IMR-90 (cell line): ENCODE measurements at regions of chr12 and their contacts with region 1.

Region 1: GRCh38 chr12:2422591-2422990 is 369.8 kb downstream of the CACNA1C start:
- DNase-seq: no peak
- ATAC-seq: no peak
- H3K4me3 ChIP-seq: no peak overlapping the region
- H3K27ac ChIP-seq: no peak overlapping the region
- H3K4me1 ChIP-seq: no peaks in the 10 kb centered on the region
- H3K27me3 ChIP-seq: no peaks in the 10 kb centered on the region
- CTCF ChIP-seq: no peak
- POLR2A ChIP-seq: no peak
- RAD21 ChIP-seq: no peak

Region 2: DNA sequence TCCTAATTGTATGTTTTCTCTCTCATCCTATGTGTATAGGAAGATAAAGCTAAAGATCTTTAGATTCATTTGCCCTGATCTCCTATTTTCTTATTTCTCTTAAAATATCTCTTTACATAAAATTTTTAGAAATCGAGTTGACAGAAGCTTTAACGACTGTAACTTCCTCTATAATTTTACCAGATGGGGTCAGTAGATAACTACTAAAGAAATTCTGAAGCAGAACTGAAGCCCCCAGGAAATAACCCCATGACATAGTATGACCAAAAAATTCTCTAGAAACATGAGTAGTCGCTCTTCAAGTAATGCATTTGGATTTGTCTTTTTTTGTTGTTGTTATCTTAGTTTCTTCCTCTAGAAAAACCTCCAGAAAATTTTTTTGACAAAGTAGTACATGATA is 1143.5 kb before region 1 on chr12:
- CTCF ChIA-PET with region 1: no interaction called
- POLR2A ChIA-PET with region 1: no interaction called
- dilution Hi-C with region 1: no loop called
- in situ Hi-C with region 1: no loop called
- intact Hi-C with region 1: no loop called
- DNase-seq: no peak
- ATAC-seq: no peak
- H3K4me3 ChIP-seq: no peak overlapping the region
- H3K27ac ChIP-seq: no peak overlapping the region
- H3K4me1 ChIP-seq: peaks cover 4% of the 10 kb centered on the region
- H3K27me3 ChIP-seq: no peaks in the 10 kb centered on the region
- CTCF ChIP-seq: peak; percentile 25; the same call in 1 of the 2 replicates
- POLR2A ChIP-seq: no peak
- RAD21 ChIP-seq: peak; percentile 22; the same call in 1 of the 2 replicates

Region 3: GRCh38 chr12:2358986-2359658 is 63.5 kb before region 1 on chr12:
- CTCF ChIA-PET with region 1: no interaction called
- POLR2A ChIA-PET with region 1: no interaction called
- dilution Hi-C with region 1: no loop called
- in situ Hi-C with region 1: no loop called
- intact Hi-C with region 1: no loop called
- DNase-seq: no peak
- ATAC-seq: no peak
- H3K4me3 ChIP-seq: no peak overlapping the region
- H3K27ac ChIP-seq: no peak overlapping the region
- H3K4me1 ChIP-seq: peaks cover 6% of the 10 kb centered on the region; the same call in 1 of the 2 replicates
- H3K27me3 ChIP-seq: no peaks in the 10 kb centered on the region
- CTCF ChIP-seq: no peak
- POLR2A ChIP-seq: no peak
- RAD21 ChIP-seq: no peak; the same call in 1 of the 2 replicates

Region 4: DNA sequence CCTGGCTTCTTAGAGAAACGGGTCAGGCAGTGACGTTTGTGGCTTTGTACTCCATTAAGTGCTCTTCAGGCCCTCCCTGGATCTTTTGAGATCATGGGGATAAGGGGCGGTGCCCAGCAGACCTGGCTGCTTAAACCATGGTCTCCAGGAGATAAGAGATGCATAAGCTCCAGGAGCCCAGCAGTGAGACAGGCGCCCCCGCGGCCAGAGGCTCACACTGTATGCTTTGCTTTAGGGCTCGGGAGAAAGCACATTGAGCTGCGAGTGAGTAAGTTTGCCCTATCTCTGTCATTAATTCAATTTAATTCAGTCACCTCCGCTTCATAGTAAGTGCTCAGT is 10.3 kb before region 1 on chr12:
- CTCF ChIA-PET with region 1: no interaction called
- POLR2A ChIA-PET with region 1: no interaction called
- dilution Hi-C with region 1: no loop called
- in situ Hi-C with region 1: no loop called
- intact Hi-C with region 1: loop called (anchors 1 kb)
- DNase-seq: no peak
- ATAC-seq: no peak
- H3K4me3 ChIP-seq: no peak overlapping the region
- H3K27ac ChIP-seq: no peak overlapping the region
- H3K4me1 ChIP-seq: no peaks in the 10 kb centered on the region
- H3K27me3 ChIP-seq: peaks cover 3% of the 10 kb centered on the region; the same call in 1 of the 2 replicates
- CTCF ChIP-seq: no peak
- POLR2A ChIP-seq: no peak
- RAD21 ChIP-seq: no peak

Region 5: DNA sequence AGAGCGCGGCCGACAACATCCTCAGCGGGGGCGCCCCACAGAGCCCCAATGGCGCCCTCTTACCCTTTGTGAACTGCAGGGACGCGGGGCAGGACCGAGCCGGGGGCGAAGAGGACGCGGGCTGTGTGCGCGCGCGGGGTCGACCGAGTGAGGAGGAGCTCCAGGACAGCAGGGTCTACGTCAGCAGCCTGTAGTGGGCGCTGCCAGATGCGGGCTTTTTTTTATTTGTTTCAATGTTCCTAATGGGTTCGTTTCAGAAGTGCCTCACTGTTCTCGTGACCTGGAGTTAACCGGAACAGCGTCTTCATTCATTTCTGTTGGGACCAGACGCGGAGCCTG is 268.4 kb after region 1 on chr12:
- CTCF ChIA-PET with region 1: no interaction called
- POLR2A ChIA-PET with region 1: no interaction called
- dilution Hi-C with region 1: no loop called
- in situ Hi-C with region 1: no loop called
- intact Hi-C with region 1: no loop called
- DNase-seq: peak; percentile 7
- ATAC-seq: peak; percentile 35; the same call in 1 of the 2 replicates
- H3K4me3 ChIP-seq: no peak overlapping the region
- H3K27ac ChIP-seq: no peak overlapping the region
- H3K4me1 ChIP-seq: no peaks in the 10 kb centered on the region
- H3K27me3 ChIP-seq: peaks cover 8% of the 10 kb centered on the region
- CTCF ChIP-seq: no peak
- POLR2A ChIP-seq: no peak
- RAD21 ChIP-seq: no peak